Right lobe of liver (tissue), 6 donors: ENCODE measurements at regions of chr18 and their contacts with region 1.

Region 1: DNA sequence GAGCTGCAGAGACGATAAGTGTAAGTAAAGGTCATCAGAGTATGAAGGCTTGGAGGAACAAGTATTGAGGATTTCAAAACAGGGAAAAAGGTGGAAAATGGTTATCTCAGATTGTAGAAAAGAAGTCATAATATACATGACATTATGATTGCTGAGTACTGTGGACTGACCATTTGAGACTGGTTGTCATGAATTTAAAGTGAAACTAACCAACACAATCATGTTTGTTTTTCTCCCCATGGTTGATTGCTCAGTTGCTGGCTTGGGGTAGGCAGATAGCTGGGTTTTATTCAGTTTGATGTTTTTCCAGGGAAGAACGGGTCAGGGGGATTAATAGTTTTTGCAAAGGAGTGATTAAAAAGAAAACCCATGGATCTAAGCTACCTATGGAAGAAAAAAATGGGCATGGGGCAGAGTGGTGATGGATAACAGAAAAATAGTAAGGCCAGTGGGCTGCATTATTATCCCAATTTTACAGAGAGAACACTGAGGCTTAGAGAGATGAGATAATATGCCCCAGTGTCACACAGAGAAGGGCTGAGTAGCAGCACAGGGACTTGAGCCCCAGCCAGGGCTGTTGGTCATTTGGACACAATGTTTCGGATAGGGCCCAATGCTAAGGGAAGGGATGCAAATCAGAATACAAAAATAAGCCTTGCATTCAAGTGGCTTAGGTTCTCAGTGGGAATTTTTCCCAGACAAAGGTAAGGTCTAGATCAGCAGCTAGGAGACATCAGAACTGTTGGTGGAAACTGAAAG is 885.7 kb downstream of the DCC start:
- DNase-seq: no peak
- ATAC-seq: no peak
- H3K4me3 ChIP-seq: no peak overlapping the region
- H3K27ac ChIP-seq: no peak overlapping the region
- H3K4me1 ChIP-seq: no peaks in the 10 kb centered on the region
- H3K27me3 ChIP-seq: no peaks in the 10 kb centered on the region
- CTCF ChIP-seq: no peak
- POLR2A ChIP-seq: no peak

Region 2: DNA sequence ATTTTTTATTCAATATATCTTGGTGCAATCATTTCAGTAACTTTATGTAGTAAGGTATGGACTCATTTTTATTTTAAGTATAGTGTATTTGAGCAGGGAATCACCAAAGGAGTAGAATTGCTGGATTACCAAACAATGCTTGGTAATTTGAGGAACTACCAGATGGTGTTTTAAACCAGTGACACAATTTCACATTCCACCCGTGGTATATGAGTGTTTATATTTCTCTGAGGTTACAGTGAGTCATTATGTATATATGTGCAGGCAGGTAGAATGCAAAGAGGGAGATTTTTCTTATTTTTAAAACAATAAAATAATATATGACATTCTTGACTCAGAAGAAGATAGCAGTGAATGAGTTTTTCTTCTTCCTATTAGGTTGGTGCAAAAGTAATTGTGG is 288.8 kb before region 1 on chr18:
- intact Hi-C with region 1: loop called in 1 of 2 experiments (anchors 5 kb)
- DNase-seq: no peak
- ATAC-seq: no peak
- H3K4me3 ChIP-seq: no peak overlapping the region
- H3K27ac ChIP-seq: no peak overlapping the region
- H3K4me1 ChIP-seq: no peaks in the 10 kb centered on the region
- H3K27me3 ChIP-seq: no peaks in the 10 kb centered on the region
- CTCF ChIP-seq: no peak
- POLR2A ChIP-seq: no peak

Region 3: GRCh38 chr18:53165770-53166169 is 60.0 kb before region 1 on chr18:
- intact Hi-C with region 1: no loop called
- DNase-seq: no peak
- ATAC-seq: no peak
- H3K4me3 ChIP-seq: no peak overlapping the region
- H3K27ac ChIP-seq: no peak overlapping the region
- H3K4me1 ChIP-seq: no peaks in the 10 kb centered on the region
- H3K27me3 ChIP-seq: no peaks in the 10 kb centered on the region
- CTCF ChIP-seq: no peak
- POLR2A ChIP-seq: no peak